ENCODE measurements at regions of chr10 and their contacts with region 1.

Region 1: DNA sequence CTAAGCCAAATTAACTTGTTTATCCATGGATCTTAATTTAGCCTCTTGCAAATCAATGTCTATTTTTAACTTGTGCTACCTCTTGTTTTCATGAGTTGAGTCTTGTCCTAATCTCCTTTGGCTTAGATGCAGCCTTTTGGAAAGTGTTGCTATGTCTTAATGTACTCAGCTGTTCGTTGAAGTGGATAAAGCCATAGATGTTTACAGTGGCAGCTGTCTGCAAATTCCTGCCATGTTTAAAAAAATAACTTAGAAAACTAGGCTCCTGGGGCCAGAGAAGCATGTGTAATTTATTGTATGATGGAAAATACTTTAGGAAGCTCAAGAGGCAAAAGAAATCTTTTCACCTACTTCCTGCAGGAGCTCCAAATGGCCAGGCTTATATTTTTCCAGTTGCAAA is 253.1 kb upstream of the RHOBTB1 start:
- DNase-seq: no peak
- ATAC-seq: peak; percentile 60
- H3K4me3 ChIP-seq: no peak overlapping the region
- H3K27ac ChIP-seq: no peak overlapping the region
- H3K4me1 ChIP-seq: no peaks in the 10 kb centered on the region; the same call in 1 of the 2 replicates
- H3K27me3 ChIP-seq: no peaks in the 10 kb centered on the region
- CTCF ChIP-seq: no peak
- POLR2A ChIP-seq: no peak
- RAD21 ChIP-seq: no peak

Region 2: GRCh38 chr10:61211468-61211867 is 14.4 kb after region 1 on chr10:
- CTCF ChIA-PET with region 1: no interaction called
- POLR2A ChIA-PET with region 1: no interaction called
- dilution Hi-C with region 1: no loop called
- in situ Hi-C with region 1: no loop called
- intact Hi-C with region 1: loop called (anchors 2 kb)
- DNase-seq: no peak
- ATAC-seq: no peak
- H3K4me3 ChIP-seq: no peak overlapping the region
- H3K27ac ChIP-seq: no peak overlapping the region
- H3K4me1 ChIP-seq: no peaks in the 10 kb centered on the region
- H3K27me3 ChIP-seq: peaks cover 2% of the 10 kb centered on the region; the same call in 1 of the 2 replicates
- CTCF ChIP-seq: no peak
- POLR2A ChIP-seq: no peak
- RAD21 ChIP-seq: no peak

Region 3: GRCh38 chr10:61244261-61244775 is 47.3 kb after region 1 on chr10:
- CTCF ChIA-PET with region 1: no interaction called
- POLR2A ChIA-PET with region 1: no interaction called
- dilution Hi-C with region 1: no loop called
- in situ Hi-C with region 1: no loop called
- intact Hi-C with region 1: loop called (anchors 5 kb)
- DNase-seq: no peak
- ATAC-seq: no peak
- H3K4me3 ChIP-seq: no peak overlapping the region
- H3K27ac ChIP-seq: no peak overlapping the region
- H3K4me1 ChIP-seq: no peaks in the 10 kb centered on the region
- H3K27me3 ChIP-seq: peaks cover 7% of the 10 kb centered on the region
- CTCF ChIP-seq: no peak
- POLR2A ChIP-seq: no peak
- RAD21 ChIP-seq: no peak